ENCODE measurements at regions of chr12 and their contacts with region 1.

Region 1: GRCh38 chr12:131454418-131455217 is 256.3 kb upstream of the SFSWAP start:
- DNase-seq: no peak
- ATAC-seq: peak; percentile 63

Region 2: DNA sequence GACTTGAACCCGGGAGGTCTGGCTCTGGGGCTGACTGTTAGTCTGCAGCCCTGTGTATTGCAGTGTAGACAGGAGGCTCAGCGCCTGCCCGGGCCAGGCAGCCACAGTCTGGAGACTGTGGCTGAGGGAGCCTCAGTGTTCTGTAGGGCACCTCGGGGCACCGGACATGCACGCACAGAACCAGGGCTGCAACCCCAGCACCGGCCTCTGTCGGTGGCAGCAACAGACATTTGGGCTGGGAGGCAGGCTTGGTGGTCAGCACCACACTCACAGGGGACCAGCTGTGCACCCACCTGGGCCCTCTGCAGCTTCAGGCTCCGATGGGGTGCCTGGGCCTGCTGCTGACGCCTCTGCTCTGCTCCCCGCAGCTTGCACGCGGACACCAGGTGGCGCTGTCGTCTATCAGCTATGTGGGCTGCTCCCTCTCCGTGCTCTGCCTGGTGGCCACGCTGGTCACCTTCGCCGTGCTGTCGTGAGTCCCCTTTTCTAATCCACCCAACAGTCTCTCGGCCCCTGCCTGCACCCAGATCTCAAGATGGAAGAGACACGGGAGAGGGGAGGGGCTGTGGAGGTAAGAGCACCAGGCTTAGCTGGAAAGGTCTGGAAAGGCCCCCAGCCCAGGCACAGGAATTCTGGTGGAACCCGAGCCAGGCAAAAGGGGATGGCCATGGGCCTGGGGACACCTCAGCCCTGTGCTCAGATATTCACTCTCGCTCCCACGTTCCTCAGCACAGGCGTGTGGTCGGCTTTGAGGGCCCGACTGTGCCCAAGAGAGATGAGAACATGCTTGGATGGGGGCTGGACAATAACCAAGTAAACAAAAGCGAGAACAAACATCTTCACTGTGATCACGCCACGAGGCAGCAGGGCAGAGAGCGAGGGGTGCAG is 349.9 kb before region 1 on chr12:
- intact Hi-C with region 1: loop called (anchors 10 kb)
- DNase-seq: peak; percentile 92
- ATAC-seq: peak; percentile 85

Region 3: DNA sequence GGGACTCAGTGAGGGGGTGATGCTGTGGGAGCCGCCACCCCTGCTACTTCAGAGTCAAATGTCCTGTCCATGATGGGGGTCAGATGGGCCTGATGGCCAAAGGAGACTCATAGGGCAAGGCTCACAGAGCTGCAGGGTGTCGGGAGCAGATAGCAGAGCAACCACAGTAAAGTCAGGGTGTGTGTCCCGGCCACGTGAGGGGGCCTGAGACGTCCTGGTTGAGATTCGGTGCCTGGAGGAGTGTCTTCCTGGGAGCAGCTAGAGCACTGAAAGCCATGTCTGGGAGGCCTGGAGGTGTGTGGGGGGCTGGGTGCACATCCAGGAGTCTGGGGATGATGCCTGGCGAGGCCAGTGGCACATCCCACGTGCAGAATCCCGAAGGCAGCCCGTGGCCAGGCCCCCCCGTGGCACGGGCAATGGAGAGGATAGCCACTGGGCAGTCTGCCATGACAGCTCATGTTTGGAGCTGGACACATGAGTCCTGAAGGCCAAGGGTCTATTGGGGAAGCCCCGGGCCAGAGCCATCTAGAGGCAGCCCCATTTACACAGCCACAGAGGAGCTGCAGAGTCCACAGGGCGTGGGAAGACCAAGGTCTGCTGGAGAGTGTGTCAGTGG is 51.7 kb before region 1 on chr12:
- intact Hi-C with region 1: no loop called
- DNase-seq: no peak
- ATAC-seq: no peak

Measured in Right ventricle myocardium inferior (tissue), 1 donor.